Esophagus squamous epithelium (tissue), 5 donors: ENCODE measurements at regions of chr1 and their contacts with region 1.

Region 1: DNA sequence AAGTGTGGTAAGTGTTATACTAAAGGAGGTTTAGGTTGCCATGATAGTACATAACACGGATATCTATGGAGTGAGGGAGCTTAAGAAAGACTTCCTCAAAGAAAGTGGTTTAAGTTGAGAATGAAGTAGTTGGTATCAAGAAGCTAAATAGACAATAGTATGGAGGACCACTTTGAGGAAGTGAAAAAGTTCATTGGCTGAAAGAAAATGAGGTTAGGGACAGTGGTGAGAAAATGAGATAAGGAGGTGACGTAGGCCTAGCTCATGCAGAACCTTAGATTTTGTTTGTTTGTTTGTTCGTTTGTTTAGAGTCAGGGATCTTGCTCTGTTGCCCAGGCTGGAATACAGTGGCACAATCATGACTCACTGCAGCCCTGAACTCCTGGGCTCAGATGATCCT is 72.2 kb upstream of the PPIH start:
- DNase-seq: no peak
- H3K4me3 ChIP-seq: no peak overlapping the region
- H3K27ac ChIP-seq: no peak overlapping the region
- H3K4me1 ChIP-seq: no peaks in the 10 kb centered on the region
- H3K27me3 ChIP-seq: no peaks in the 10 kb centered on the region
- CTCF ChIP-seq: no peak
- POLR2A ChIP-seq: no peak

Region 2: DNA sequence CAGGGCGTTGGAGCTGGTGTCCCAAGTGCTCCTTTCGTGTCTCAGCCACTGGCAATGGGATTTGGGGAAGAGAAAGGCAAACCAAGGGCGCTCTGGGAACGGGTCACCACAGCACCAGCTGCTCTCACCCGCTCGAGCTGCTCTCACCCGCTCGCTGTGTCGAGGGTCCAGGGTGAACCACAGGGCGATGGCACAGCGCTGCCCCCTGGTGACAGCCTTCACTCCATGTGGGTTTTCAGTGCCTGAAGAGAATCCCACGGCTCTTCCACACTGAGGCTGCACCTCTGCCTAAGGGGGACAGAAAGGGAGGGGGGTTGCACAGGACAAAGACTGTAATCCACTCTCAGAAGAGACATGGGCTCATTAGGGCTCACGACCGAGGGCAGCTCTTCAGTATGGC is 161.1 kb after region 1 on chr1:
- intact Hi-C with region 1: loop called (anchors 5 kb)
- DNase-seq: no peak
- H3K4me3 ChIP-seq: no peak overlapping the region
- H3K27ac ChIP-seq: no peak overlapping the region
- H3K4me1 ChIP-seq: peaks cover 0 to 35% (median 6%) of the 10 kb centered on the region in 3 donors
- H3K27me3 ChIP-seq: no peaks in the 10 kb centered on the region
- CTCF ChIP-seq: peak; percentile 48 to 66 (median 56)
- POLR2A ChIP-seq: no peak